Activated CD4-positive, alpha-beta T cell treated with anti-CD3 and anti-CD28 coated beads, Interleukin-2, amount 10 ng/mL, durations not matched to agents 24 days and 14 days (primary cell): ENCODE measurements at regions of chr18 and their contacts with region 1.

Region 1: DNA sequence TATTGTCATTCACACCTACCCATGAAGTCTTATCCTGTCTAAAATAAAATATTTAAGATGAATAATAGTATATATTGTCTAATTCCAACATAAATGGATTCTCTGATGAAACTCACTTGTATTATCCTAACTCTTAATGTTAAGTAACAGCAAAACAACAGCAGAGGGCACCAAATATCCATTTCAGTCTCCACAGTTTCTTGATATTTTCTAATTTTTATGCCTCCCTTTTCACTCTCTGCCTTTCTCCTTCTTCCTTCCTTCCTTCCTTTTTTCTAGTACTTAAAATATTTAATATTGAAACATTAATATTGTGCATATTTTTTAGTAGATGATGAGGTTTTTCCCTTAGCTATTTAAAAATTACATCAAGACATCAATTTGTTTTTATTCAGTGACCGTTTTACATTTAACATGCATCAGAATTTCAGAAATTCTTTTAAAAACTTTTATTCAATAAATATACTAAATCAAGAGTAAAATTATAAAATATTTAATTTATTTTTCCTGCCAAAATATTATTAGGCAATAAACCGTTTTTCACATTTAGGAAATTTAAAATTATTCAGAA is 97.6 kb downstream of the WDR7 start:
- DNase-seq: peak; percentile 63
- H3K4me3 Mint-ChIP-seq: no peak overlapping the region
- H3K27ac Mint-ChIP-seq: no peak overlapping the region
- H3K4me1 Mint-ChIP-seq: peaks cover 18% of the 10 kb centered on the region
- H3K27me3 Mint-ChIP-seq: no peaks in the 10 kb centered on the region

Region 2: GRCh38 chr18:56709463-56709862 is 39.3 kb before region 1 on chr18:
- intact Hi-C with region 1: loop called (anchors 2 kb)
- DNase-seq: peak; percentile 84
- H3K4me3 Mint-ChIP-seq: no peak overlapping the region
- H3K27ac Mint-ChIP-seq: no peak overlapping the region
- H3K4me1 Mint-ChIP-seq: peaks cover 11% of the 10 kb centered on the region
- H3K27me3 Mint-ChIP-seq: no peaks in the 10 kb centered on the region

Region 3: GRCh38 chr18:56716692-56717146 is 32.1 kb before region 1 on chr18:
- intact Hi-C with region 1: loop called (anchors 1 kb)
- DNase-seq: no peak
- H3K4me3 Mint-ChIP-seq: no peak overlapping the region
- H3K27ac Mint-ChIP-seq: peak overlapping the region; percentile 63
- H3K4me1 Mint-ChIP-seq: peaks cover 26% of the 10 kb centered on the region
- H3K27me3 Mint-ChIP-seq: no peaks in the 10 kb centered on the region

Region 4: DNA sequence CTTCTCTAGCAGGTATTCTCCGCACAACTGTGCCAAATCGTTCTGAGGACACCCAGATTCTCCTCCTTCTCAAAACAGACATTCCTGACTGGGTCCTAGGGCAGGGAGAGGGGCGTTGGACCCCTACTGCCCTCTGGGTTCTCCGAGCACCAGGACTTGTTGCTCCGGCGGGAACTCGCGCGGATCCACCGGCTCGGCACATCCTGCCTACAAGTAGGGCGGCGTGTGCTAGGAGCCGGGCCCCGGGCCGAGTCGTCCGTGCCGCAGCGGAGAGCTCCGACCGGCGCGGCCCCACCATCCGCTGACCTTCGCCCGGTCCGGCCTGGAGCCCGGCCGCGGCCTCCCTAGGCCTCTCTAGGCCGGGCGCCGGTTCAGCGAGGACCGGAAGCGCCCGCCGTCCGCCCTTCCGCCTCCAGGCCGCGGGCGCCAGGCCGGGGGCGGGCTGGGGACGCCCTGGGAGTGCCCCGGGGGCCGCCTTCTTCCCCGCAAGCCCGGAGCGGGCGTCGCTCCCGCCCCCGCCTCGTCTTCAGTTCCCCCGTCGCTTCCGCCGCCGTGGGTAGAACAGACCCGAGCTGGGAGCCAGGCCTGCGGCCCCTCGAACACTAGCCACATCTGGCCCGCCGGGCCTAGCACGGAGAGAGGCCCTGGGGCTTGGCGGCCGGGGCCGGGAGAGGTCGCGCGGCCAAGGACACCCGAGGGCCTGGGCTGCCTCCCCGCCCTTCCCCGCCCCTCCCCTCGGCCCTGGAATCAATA is 678.8 kb after region 1 on chr18:
- intact Hi-C with region 1: loop called (anchors 5 kb)
- DNase-seq: no peak
- H3K4me3 Mint-ChIP-seq: no peak overlapping the region
- H3K27ac Mint-ChIP-seq: no peak overlapping the region
- H3K4me1 Mint-ChIP-seq: peaks cover 5% of the 10 kb centered on the region
- H3K27me3 Mint-ChIP-seq: peaks cover 58% of the 10 kb centered on the region

Region 5: DNA sequence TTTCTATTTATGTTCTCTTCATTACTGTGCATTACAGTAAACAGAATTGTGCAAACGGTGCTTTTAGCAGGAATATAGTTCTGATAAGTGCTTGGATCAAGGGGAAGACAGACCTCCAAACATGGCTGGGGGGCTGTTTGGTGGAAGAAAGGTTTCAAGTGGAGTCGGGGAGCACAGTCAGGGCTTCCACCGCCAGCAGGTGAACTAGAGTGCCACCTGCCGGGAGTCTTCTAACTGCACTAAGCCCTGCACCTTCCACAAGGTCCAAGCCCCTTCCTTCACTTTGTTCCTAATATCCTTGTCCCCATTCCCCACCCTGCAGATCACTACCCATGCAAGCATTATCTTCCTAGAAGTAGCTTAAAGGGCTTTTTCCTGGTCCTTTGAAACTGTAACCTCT is 697.5 kb after region 1 on chr18:
- intact Hi-C with region 1: loop called (anchors 1 kb)
- DNase-seq: peak; percentile 71
- H3K4me3 Mint-ChIP-seq: no peak overlapping the region
- H3K27ac Mint-ChIP-seq: no peak overlapping the region
- H3K4me1 Mint-ChIP-seq: peaks cover 3% of the 10 kb centered on the region
- H3K27me3 Mint-ChIP-seq: peaks cover 36% of the 10 kb centered on the region

Region 6: GRCh38 chr18:57561728-57562423 is 813.1 kb after region 1 on chr18:
- intact Hi-C with region 1: loop called (anchors 5 kb)
- DNase-seq: peak; percentile 81
- H3K4me3 Mint-ChIP-seq: no peak overlapping the region
- H3K27ac Mint-ChIP-seq: no peak overlapping the region
- H3K4me1 Mint-ChIP-seq: no peaks in the 10 kb centered on the region
- H3K27me3 Mint-ChIP-seq: no peaks in the 10 kb centered on the region